HepG2 (cell line): ENCODE measurements at regions of chr1 and their contacts with region 1.

Region 1: DNA sequence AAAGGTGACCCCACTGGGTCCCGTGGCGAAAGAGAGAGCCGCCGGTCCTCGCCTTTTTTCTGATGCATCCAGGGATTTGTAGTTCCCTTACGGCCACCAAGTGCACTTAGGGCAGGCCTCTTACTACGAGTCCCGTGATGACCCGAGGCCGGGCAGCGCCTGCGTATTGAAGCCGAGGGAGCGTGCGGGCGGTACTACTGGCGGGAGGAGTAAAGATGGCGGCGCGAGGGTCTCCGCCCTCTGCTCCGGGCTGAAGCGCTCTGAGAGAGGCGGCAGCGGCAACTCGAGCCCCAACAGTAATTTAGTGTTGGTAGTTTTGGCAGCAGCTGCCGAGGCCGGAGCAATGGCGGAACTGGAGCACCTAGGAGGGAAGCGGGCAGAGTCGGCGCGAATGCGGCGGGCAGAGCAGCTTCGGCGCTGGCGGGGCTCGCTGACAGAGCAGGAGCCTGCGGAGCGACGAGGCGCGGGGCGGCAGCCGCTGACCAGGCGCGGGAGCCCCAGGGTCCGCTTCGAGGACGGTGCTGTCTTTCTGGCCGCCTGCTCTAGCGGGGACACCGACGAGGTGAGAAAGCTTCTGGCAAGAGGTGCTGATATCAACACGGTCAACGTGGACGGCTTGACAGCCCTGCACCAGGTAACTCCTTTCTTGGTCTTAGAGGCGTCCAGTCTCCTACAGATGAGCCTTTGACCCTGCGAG is at the start of gene PPP1R12B:
- DNase-seq: peak; percentile 98
- ATAC-seq: peak; percentile 98
- H3K4me3 ChIP-seq: peak within 1 kb of the TSS; percentile 71 to 88 (median 84)
- H3K27ac ChIP-seq: peak within 1 kb of the TSS; percentile 87
- H3K4me1 ChIP-seq: peaks cover 54% of the 10 kb centered on the region
- H3K27me3 ChIP-seq: no peaks in the 10 kb centered on the region; a peak in 1 of 5 replicates
- CTCF ChIP-seq: 0 out of 2 replicates have a peak, but pooled peaks have one; percentile 2
- EP300 ChIP-seq: peak in 1 of 2 experiments; percentile 55; a peak in 2 of 4 replicates
- POLR2A ChIP-seq: peak; percentile 63 to 74
- RAD21 ChIP-seq: peak; percentile 27
- total RNA-seq, gene PPP1R12B: 5.0 and 12.0 TPM in 2 replicates

Region 2: GRCh38 chr1:202207292-202207691 is 141.4 kb before region 1 on chr1:
- CTCF ChIA-PET with region 1: no interaction called
- POLR2A ChIA-PET with region 1: no interaction called
- in situ Hi-C with region 1: no loop called
- intact Hi-C with region 1: no loop called
- DNase-seq: no peak
- ATAC-seq: peak; percentile 65
- H3K4me3 ChIP-seq: no peak overlapping the region
- H3K27ac ChIP-seq: no peak overlapping the region
- H3K4me1 ChIP-seq: no peaks in the 10 kb centered on the region
- H3K27me3 ChIP-seq: peaks cover 0 to 7% of the 10 kb centered on the region in 2 experiments; a peak in 4 of 5 replicates
- CTCF ChIP-seq: no peak
- EP300 ChIP-seq: no peak
- POLR2A ChIP-seq: no peak
- RAD21 ChIP-seq: no peak

Region 3: DNA sequence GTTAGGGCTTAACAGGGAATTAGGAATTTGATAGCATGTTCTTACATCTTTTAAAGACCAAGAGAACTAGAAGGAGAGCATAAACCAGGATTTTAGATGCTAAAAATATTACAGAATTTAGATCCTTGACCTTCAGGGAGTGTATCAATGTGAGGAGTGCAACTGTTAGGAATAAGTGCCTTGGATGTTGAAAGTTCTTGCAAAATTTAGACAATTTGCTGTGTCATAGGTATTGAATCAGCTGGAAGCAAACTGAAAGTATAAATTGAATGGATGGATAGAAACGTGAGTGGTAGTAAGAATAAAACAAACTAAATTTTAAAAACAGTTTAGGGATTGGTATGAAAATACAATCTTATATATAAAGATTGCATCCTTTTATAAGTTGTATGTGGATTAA is 27.6 kb after region 1 on chr1:
- CTCF ChIA-PET with region 1: no interaction called
- POLR2A ChIA-PET with region 1: no interaction called
- in situ Hi-C with region 1: no loop called
- intact Hi-C with region 1: loop called (anchors 5 kb)
- DNase-seq: no peak
- ATAC-seq: no peak
- H3K4me3 ChIP-seq: no peak overlapping the region
- H3K27ac ChIP-seq: no peak overlapping the region
- H3K4me1 ChIP-seq: peaks cover 17% of the 10 kb centered on the region
- H3K27me3 ChIP-seq: no peaks in the 10 kb centered on the region
- CTCF ChIP-seq: no peak
- EP300 ChIP-seq: no peak
- POLR2A ChIP-seq: no peak
- RAD21 ChIP-seq: no peak

Region 4: DNA sequence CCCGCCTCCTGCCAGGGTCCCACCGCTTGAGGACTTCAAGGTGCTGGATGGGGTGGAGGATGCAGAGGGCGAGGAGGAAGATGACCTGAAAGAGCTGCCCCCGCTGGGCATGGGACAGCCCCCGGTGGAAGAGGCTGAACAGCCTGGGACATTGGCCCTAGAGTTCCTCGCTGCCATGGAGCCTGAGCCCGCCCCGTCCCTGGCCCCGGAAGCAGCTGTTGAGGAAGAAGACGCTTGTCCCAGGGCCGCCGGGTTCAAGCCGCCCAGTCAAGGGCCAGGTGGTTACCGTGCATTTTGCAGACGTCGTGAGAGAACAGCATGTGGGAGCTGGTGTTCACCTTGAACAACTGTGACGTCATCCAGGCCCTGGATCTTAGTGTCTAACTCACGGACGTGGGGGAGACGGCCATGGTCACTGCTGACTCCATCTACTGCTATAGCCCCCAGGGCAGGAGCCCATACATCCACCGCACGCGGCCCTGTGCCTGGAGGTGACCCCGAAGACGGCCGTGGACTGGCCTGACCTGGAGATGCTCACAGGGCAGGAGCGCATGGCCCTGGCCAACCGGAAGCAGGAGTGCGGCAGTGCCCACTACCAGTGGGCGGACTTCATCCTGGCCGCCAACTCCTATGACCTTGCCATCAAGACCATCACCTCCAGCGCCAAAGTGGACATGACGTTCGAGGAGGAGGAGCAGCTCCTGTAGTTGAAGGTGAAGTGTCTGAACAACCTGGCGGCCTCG is 89.9 kb after region 1 on chr1:
- CTCF ChIA-PET with region 1: no interaction called
- POLR2A ChIA-PET with region 1: no interaction called
- in situ Hi-C with region 1: no loop called
- intact Hi-C with region 1: loop called (anchors 10 kb)
- DNase-seq: no peak
- ATAC-seq: no peak; the same call in 2 of the 3 replicates
- H3K4me3 ChIP-seq: no peak overlapping the region
- H3K27ac ChIP-seq: no peak overlapping the region
- H3K4me1 ChIP-seq: peaks cover 6% of the 10 kb centered on the region
- H3K27me3 ChIP-seq: no peaks in the 10 kb centered on the region
- CTCF ChIP-seq: no peak
- EP300 ChIP-seq: no peak
- POLR2A ChIP-seq: no peak
- RAD21 ChIP-seq: no peak